PC-9 (cell line): ENCODE measurements at regions of chr21 and their contacts with region 1.

Region 1: GRCh38 chr21:15667010-15667409 is 62.8 kb upstream of the USP25 start:
- DNase-seq: peak in 1 of 2 experiments; percentile 92
- H3K4me3 ChIP-seq: no peak overlapping the region
- H3K27ac ChIP-seq: peak overlapping the region; percentile 88
- H3K4me1 ChIP-seq: peaks cover 25% of the 10 kb centered on the region
- H3K27me3 ChIP-seq: no peaks in the 10 kb centered on the region
- CTCF ChIP-seq: no peak

Region 2: DNA sequence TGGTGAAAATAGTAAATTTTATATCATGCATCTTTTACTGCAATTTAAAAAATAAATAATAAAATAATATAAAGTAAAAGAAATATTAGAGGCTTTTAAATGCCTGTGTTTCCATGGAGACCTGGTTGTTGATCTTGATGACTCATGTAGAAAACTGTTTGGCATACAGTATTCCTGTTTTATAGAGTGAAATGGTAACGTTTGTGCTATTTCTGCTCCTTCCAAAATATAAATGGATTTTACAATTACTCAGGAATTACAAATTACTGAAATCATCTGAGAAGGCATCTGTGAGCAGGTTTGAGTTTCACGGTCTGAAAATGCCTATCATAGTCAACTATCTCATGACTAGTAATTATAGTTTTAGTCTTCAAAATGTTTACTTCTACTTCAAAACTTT is 35.6 kb before region 1 on chr21:
- CTCF ChIA-PET with region 1: no interaction called
- POLR2A ChIA-PET with region 1: interaction called, 12 read pairs
- intact Hi-C with region 1: no loop called
- DNase-seq: no peak
- H3K4me3 ChIP-seq: no peak overlapping the region
- H3K27ac ChIP-seq: no peak overlapping the region
- H3K4me1 ChIP-seq: peaks cover 18% of the 10 kb centered on the region
- H3K27me3 ChIP-seq: no peaks in the 10 kb centered on the region
- CTCF ChIP-seq: no peak